MCF 10A (cell line): ENCODE measurements at regions of chr1 and their contacts with region 1.

Region 1: GRCh38 chr1:159854693-159855192 is 7.7 kb downstream of the VSIG8 start:
- DNase-seq: peak; percentile 88
- H3K4me3 Mint-ChIP-seq: peak overlapping the region; percentile 77
- H3K27ac Mint-ChIP-seq: peak overlapping the region; percentile 61
- H3K4me1 Mint-ChIP-seq: peaks cover 29% of the 10 kb centered on the region
- H3K27me3 Mint-ChIP-seq: no peaks in the 10 kb centered on the region
- CTCF ChIP-seq: no peak

Region 2: DNA sequence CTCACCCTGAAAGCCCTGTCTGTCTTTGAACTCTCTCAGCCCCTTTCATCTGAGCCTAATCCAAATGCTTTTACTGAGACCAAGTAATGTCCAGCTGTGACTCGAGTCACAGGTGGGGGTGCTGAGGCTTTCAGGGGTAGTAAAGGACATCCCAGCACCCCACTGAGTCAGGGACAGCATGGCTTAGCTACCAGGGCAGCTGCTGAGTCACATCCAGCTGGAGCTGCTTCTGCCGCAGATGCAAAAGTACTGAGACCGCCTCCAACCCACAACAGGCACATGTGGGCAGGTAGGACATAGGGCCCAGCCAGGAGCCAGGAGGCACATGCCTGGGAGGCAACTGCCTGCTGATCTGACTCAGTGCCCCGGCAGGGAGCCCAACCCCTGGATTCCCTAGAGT is 14.4 kb after region 1 on chr1:
- CTCF ChIA-PET with region 1: interaction called, 7 read pairs
- POLR2A ChIA-PET with region 1: interaction called, 80 read pairs
- intact Hi-C with region 1: no loop called
- DNase-seq: peak; percentile 84
- H3K4me3 Mint-ChIP-seq: peak overlapping the region; percentile 22
- H3K27ac Mint-ChIP-seq: peak overlapping the region; percentile 85
- H3K4me1 Mint-ChIP-seq: peaks cover 51% of the 10 kb centered on the region
- H3K27me3 Mint-ChIP-seq: no peaks in the 10 kb centered on the region
- CTCF ChIP-seq: no peak

Region 3: GRCh38 chr1:159996653-159997052 is 141.9 kb after region 1 on chr1:
- CTCF ChIA-PET with region 1: no interaction called
- POLR2A ChIA-PET with region 1: no interaction called
- intact Hi-C with region 1: no loop called
- DNase-seq: peak; percentile 72
- H3K4me3 Mint-ChIP-seq: no peak overlapping the region
- H3K27ac Mint-ChIP-seq: no peak overlapping the region
- H3K4me1 Mint-ChIP-seq: peaks cover 23% of the 10 kb centered on the region
- H3K27me3 Mint-ChIP-seq: no peaks in the 10 kb centered on the region
- CTCF ChIP-seq: no peak